Naive thymus-derived CD4-positive, alpha-beta T cell (primary cell): ENCODE measurements at regions of chr3 and their contacts with region 1.

Region 1: DNA sequence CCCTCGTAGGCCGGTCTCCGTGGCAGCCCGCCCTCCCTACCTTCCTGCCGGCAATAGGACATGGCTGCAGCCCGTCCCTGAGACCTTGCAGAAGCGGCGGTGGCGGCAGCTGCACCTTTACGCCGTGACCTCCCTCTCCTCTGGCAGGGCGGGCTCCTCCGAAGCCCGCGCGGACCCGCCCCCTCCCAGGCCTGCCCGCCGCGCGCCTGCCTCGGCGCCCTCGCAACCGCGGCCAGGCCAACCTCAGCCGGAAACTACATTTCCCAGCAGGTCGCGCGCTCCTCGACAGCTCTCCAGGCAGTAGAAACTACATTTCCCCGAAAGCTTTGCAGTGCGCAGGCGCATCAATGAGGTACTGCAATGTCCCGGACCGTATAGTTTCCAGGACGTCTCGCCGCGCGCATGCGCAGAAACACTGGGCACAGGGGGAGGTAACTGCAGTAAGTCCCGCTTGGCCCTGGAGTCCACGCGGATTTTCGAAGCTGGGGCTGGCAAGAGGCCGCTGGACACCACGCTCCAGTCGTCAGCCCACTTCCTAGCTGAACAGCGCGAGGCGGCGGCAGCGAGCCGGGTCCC is at the starts of genes CHCHD4 and TMEM43:
- DNase-seq: peak; percentile 91 to 99 (median 98)
- ATAC-seq: peak; percentile 96
- H3K4me3 ChIP-seq: peak within 1 kb of the TSS; percentile 100
- H3K4me3 Mint-ChIP-seq: peak within 1 kb of the TSS; percentile 93 to 98 (median 96)
- H3K27ac ChIP-seq: peak within 1 kb of the TSS; percentile 89
- H3K27ac Mint-ChIP-seq: peak within 1 kb of the TSS; percentile 87 to 97 (median 94)
- H3K4me1 ChIP-seq: peaks cover 28 to 30% of the 10 kb centered on the region in 2 donors
- H3K4me1 Mint-ChIP-seq: peaks cover 43 to 70% (median 63%) of the 10 kb centered on the region in 7 donors
- H3K27me3 ChIP-seq: no peaks in the 10 kb centered on the region
- H3K27me3 Mint-ChIP-seq: no peaks in the 10 kb centered on the region
- total RNA-seq, gene CHCHD4: 3.3 to 14.1 (median 8.4) TPM
- total RNA-seq, gene TMEM43: 30.1 to 54.8 (median 46.5) TPM

Region 2: DNA sequence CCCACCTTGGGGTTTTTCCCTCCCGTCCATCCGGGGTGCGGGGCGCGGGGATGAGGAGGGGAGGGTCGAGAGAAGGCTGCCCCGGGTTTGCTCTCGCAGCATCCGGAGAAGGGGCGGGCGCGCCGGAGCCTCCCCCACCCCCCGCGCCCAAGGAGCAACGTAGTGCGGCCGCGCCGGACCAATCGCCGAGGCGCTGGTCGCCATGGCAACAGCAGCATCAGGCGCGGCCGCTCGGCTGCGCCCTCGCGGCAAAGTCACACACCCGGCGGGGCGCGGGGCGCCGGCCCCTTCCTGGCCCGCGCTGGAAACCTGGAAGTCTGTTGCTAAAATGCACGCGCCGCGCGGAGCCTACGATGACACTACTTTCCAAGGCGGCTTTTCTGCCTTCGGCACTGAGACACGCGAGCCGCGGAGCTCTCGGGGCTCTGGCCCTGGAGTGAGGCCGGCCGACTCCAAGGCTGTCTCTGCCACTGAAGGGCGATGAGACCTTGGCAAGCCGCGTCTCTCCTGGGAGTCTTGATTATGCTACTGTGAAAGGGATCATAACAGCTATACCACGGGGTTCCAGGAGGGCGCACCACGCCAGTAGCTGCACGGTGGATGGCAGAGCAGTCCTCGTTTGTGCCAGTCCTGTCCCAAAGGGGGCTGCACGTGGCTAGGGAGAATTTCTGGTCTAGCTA is 1051.2 kb before region 1 on chr3 and contains the start of gene IQSEC1:
- CTCF ChIA-PET with region 1: no interaction called
- POLR2A ChIA-PET with region 1: no interaction called
- intact Hi-C with region 1: loop called in 1 of 2 experiments (anchors 10 kb)
- DNase-seq: peak; percentile 15 to 70 (median 51)
- ATAC-seq: peak; percentile 80
- H3K4me3 ChIP-seq: peak within 1 kb of the TSS; percentile 53
- H3K4me3 Mint-ChIP-seq: peak within 1 kb of the TSS; percentile 59 to 86 (median 77)
- H3K27ac ChIP-seq: no peak within 1 kb of the TSS
- H3K27ac Mint-ChIP-seq: peak within 1 kb of the TSS in 6 of 9 donors; percentile 36 to 77 (median 60)
- H3K4me1 ChIP-seq: peaks cover 28 to 35% of the 10 kb centered on the region in 2 donors
- H3K4me1 Mint-ChIP-seq: peaks cover 18 to 46% (median 39%) of the 10 kb centered on the region in 7 donors
- H3K27me3 ChIP-seq: peaks cover 0 to 3% of the 10 kb centered on the region in 2 donors
- H3K27me3 Mint-ChIP-seq: peaks cover 8 to 45% (median 12%) of the 10 kb centered on the region in 5 donors
- total RNA-seq, gene IQSEC1: 51.8 to 163 (median 79.5) TPM

Region 3: DNA sequence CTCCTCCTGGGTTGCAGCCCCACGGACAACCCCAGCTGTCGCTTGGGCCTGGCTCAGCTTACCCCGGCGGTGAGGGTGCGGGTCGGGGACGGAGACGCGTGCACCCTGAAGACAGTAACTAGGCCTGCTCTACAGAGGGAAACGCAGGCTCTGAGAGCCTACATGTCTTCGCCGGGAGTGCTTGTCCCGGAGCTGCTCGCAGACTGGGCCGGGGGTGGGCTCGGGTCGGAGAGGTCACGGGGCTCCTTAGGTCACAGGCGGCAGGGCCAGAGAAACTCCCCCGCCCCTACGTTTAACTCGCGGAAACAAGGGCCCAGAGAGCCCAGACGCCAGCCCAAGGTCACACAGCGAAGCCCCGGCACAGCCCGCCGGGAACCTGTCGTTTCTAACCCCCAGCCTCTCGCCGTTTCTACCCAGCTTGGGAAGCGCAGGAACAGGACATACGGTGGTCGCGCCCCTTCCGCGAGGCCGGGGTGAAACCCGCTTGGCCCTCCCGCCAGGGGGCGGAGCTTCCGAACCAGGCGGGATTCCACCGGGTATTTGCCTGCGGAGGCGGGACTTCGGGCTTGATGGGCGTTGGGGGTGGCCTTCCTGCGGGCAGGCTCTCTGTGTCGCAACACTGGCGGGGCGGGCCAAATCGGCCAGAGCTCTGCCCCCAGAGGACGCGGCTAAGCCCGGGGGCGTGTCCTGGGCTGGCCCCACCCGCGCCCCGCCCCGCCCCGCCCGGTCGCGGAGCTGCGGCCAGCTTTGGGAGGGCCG is 644.9 kb before region 1 on chr3 and contains the start of gene HDAC11:
- CTCF ChIA-PET with region 1: no interaction called
- POLR2A ChIA-PET with region 1: interaction called, 4 read pairs
- intact Hi-C with region 1: loop called in 1 of 2 experiments (anchors 2 kb)
- DNase-seq: peak; percentile 93 to 98 (median 95)
- ATAC-seq: peak; percentile 98
- H3K4me3 ChIP-seq: peak within 1 kb of the TSS; percentile 97
- H3K4me3 Mint-ChIP-seq: peak within 1 kb of the TSS; percentile 90 to 97 (median 94)
- H3K27ac ChIP-seq: peak within 1 kb of the TSS; percentile 98
- H3K27ac Mint-ChIP-seq: peak within 1 kb of the TSS; percentile 82 to 97 (median 94)
- H3K4me1 ChIP-seq: peaks cover 8 to 15% of the 10 kb centered on the region in 2 donors
- H3K4me1 Mint-ChIP-seq: peaks cover 4 to 22% (median 15%) of the 10 kb centered on the region in 7 donors
- H3K27me3 ChIP-seq: no peaks in the 10 kb centered on the region
- H3K27me3 Mint-ChIP-seq: peaks cover 0 to 13% (median 0%) of the 10 kb centered on the region in 5 donors
- total RNA-seq, gene HDAC11: 1.2 to 8.0 (median 7.3) TPM

Region 4: GRCh38 chr3:13776268-13777050 is 348.2 kb before region 1 on chr3:
- CTCF ChIA-PET with region 1: no interaction called
- POLR2A ChIA-PET with region 1: no interaction called
- intact Hi-C with region 1: no loop called
- DNase-seq: no peak
- ATAC-seq: no peak
- H3K4me3 ChIP-seq: no peak overlapping the region
- H3K4me3 Mint-ChIP-seq: no peak overlapping the region
- H3K27ac ChIP-seq: no peak overlapping the region
- H3K27ac Mint-ChIP-seq: no peak overlapping the region
- H3K4me1 ChIP-seq: no peaks in the 10 kb centered on the region
- H3K4me1 Mint-ChIP-seq: peaks cover 0 to 2% (median under 1%) of the 10 kb centered on the region in 7 donors
- H3K27me3 ChIP-seq: no peaks in the 10 kb centered on the region
- H3K27me3 Mint-ChIP-seq: peaks cover 0 to 7% (median 0%) of the 10 kb centered on the region in 5 donors

Region 5: DNA sequence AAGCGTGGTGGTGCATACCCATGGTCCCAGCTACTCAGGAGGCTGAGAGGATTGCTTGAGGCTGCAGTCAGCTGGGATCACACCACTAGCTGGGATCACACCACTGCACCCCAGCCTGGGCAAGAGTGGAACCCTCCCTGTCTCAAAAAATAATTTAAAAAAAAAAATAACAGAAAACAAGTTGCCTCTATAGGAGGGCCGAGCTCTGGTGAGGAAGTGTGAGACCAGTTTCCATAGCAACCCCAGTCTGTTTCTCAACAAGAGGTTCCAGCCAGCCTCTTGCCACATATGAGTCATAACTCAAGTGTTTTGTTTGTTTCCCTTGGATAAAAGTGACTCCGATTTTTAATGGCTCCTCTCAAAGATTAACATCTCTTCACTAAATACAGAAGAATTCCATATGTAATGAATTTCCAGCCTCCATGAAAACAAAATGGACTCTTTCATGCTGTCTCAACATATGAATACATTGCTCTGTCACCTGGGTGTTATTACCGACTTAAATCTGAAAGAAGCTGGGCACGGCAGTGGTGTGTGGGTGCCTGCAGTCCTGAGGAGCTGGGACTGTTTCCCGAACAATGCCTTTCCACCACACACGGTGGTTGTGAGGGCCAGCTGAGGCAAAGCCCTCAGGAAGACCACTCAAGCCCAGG is 19.8 kb after region 1 on chr3:
- CTCF ChIA-PET with region 1: interaction called, 12 read pairs
- POLR2A ChIA-PET with region 1: interaction called, 96 read pairs
- intact Hi-C with region 1: loop called (anchors 1 kb)
- DNase-seq: peak; percentile 45 to 93 (median 84)
- ATAC-seq: peak; percentile 75
- H3K4me3 ChIP-seq: peak overlapping the region; percentile 10
- H3K4me3 Mint-ChIP-seq: peak overlapping the region; percentile 53 to 76 (median 66)
- H3K27ac ChIP-seq: peak overlapping the region; percentile 79
- H3K27ac Mint-ChIP-seq: peak overlapping the region; percentile 89 to 100 (median 98)
- H3K4me1 ChIP-seq: peaks cover 50 to 52% of the 10 kb centered on the region in 2 donors
- H3K4me1 Mint-ChIP-seq: peaks cover 34 to 62% (median 56%) of the 10 kb centered on the region in 7 donors
- H3K27me3 ChIP-seq: no peaks in the 10 kb centered on the region
- H3K27me3 Mint-ChIP-seq: no peaks in the 10 kb centered on the region

Region 6: DNA sequence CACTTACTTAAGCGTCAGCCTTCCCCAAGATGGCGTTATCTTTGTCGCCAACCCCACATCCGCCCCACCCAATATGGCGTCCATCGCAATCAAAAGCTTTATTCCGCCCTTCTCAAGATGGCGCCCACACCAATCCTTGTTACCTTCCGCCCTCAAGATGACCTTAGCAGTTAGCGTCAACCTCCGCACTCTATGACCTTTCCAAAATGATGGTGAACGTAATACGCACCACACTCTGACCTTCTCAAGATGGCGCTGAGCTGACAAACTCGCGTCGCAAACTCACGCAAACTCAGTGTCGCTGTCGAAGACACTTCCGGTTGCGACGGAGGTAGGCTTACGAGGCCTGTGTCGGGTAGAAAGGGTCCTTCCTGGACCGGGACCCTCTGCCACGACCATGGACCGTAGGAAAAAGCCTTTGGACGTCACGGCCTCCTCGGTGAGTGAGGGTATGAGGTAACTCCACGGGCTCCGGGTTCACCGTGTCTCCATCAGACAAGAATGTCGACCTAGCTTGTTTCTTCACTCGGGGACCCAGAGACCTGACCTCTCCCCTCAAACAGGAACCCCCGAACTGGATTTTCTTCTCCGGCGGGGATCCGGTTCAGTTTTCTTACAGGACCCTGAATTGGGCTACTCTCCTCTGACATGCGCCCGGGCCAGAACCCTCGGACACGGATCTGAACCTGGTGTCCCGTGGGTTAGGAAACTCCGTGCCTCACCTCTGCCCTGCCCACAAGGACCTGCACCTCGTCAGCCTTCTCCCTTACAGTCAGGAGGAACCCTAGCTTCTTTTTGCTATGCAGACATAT is 526.9 kb after region 1 on chr3 and contains the start of gene CCDC174:
- CTCF ChIA-PET with region 1: no interaction called
- POLR2A ChIA-PET with region 1: interaction called, 10 read pairs
- intact Hi-C with region 1: loop called in 1 of 2 experiments (anchors 1 kb)
- DNase-seq: peak; percentile 84 to 98 (median 96)
- ATAC-seq: peak; percentile 99
- H3K4me3 ChIP-seq: peak within 1 kb of the TSS; percentile 90
- H3K4me3 Mint-ChIP-seq: peak within 1 kb of the TSS; percentile 84 to 100 (median 96)
- H3K27ac ChIP-seq: peak within 1 kb of the TSS; percentile 94
- H3K27ac Mint-ChIP-seq: peak within 1 kb of the TSS; percentile 92 to 100 (median 98)
- H3K4me1 ChIP-seq: peaks cover 21 to 25% of the 10 kb centered on the region in 2 donors
- H3K4me1 Mint-ChIP-seq: peaks cover 25 to 80% (median 66%) of the 10 kb centered on the region in 7 donors
- H3K27me3 ChIP-seq: no peaks in the 10 kb centered on the region
- H3K27me3 Mint-ChIP-seq: peaks cover 0 to 2% (median 0%) of the 10 kb centered on the region in 5 donors
- total RNA-seq, gene CCDC174: 21.6 to 59.2 (median 46.2) TPM

Region 7: GRCh38 chr3:15815696-15816095 is 1691.0 kb after region 1 on chr3:
- CTCF ChIA-PET with region 1: no interaction called
- POLR2A ChIA-PET with region 1: no interaction called
- intact Hi-C with region 1: no loop called
- DNase-seq: peak in 6 of 9 donors; percentile 12 to 48 (median 28)
- ATAC-seq: peak; percentile 53
- H3K4me3 ChIP-seq: no peak overlapping the region
- H3K4me3 Mint-ChIP-seq: no peak overlapping the region
- H3K27ac ChIP-seq: no peak overlapping the region
- H3K27ac Mint-ChIP-seq: peak overlapping the region in 1 of 9 donors; percentile 59
- H3K4me1 ChIP-seq: peaks cover 0 to 8% of the 10 kb centered on the region in 2 donors
- H3K4me1 Mint-ChIP-seq: peaks cover 6 to 47% (median 43%) of the 10 kb centered on the region in 7 donors
- H3K27me3 ChIP-seq: no peaks in the 10 kb centered on the region
- H3K27me3 Mint-ChIP-seq: no peaks in the 10 kb centered on the region